Activated CD4-positive, alpha-beta T cell treated with anti-CD3 and anti-CD28 coated beads, Interleukin-2, amount 10 ng/mL, durations not matched to agents 24 days and 14 days (primary cell): ENCODE measurements at regions of chr19 and their contacts with region 1.

Region 1: DNA sequence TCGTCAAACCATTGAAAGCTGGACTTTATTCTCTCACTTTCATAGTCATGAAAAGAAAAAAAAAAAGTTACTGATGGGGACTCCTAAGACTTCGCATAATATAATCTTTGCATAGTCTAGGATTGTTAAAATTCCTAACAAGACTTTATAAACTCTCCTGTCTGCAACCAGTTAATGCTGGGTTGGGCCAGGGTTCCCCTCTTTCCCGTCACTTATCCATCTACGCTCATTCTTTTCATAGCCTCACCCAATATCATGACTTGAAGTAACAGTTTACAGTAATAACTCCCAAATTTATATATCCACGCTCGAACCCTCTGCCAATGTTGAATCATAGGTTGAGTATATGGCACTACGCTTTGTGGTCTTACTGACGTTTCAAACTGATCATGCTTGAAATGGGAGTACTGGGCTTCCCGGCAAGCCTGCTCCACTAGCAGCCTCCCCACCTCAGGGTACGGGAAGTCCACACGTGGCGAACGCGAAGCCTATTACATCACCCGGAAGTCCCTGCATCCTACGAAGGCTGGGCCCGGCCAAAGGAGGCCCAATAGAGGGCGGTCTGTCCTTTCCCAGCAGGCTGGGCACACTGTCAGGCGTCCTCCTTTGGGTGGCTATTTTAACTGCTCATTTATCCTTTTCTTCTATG is 743 bp upstream of the ZNF460 start:
- DNase-seq: peak; percentile 93
- H3K4me3 Mint-ChIP-seq: no peak overlapping the region
- H3K27ac Mint-ChIP-seq: no peak overlapping the region
- H3K4me1 Mint-ChIP-seq: peaks cover 24% of the 10 kb centered on the region
- H3K27me3 Mint-ChIP-seq: no peaks in the 10 kb centered on the region

Region 2: DNA sequence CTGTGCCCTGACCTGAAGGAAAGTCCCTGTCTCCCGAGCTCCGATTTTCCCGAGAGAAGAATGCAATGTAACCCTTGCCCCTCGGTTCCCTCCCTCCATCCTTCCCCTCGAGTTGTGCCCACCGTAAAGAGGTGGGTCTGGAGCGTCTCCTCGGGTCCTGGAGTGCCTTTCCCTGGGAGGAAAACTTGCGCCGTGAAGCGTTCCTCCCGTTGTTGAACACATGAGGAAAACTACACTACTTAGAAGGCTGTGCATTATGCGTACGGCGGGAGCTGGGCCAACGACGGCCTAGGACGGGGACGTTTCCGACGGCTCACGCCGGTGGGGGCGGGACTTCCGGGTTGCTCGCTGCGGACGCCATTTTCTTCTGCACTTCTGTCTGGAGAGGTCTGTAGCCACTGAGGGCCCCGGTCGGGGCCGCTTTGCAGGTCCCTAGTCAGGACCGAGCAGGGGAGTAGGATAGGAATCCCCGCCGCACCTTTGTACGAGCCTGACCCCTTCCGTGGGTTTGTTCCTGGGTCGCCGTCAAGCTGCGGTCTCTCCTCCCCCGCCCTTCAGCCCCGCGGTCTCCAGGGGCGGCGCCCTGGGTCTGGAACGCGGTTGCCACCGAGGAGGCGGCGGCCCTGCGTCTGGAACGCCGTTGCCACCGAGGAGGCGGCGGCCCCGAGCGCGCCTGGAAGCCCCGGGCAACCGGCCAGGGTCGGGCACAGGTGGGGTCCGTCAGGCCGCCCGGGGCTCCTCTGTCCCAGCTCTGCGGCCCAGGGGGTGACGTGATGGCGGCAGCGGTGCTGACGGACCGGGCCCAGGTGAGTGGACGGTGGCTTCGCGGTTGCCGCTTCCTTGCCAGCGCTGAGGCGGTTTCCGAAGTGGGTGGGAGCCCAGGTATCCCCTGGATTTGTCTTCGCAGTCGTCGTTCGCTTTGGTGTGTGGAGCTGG is 88.1 kb before region 1 on chr19 and contains the start of gene ZNF264:
- intact Hi-C with region 1: loop called (anchors 1 kb)
- DNase-seq: peak; percentile 97
- H3K4me3 Mint-ChIP-seq: peak within 1 kb of the TSS; percentile 93
- H3K27ac Mint-ChIP-seq: peak within 1 kb of the TSS; percentile 85
- H3K4me1 Mint-ChIP-seq: peaks cover 20% of the 10 kb centered on the region
- H3K27me3 Mint-ChIP-seq: no peaks in the 10 kb centered on the region
- total RNA-seq, gene ZNF264: 18.0 and 19.9 TPM in 2 replicates

Region 3: GRCh38 chr19:57240311-57241090 is 39.0 kb before region 1 on chr19 and contains the start of gene ZNF805:
- intact Hi-C with region 1: loop called (anchors 1 kb)
- DNase-seq: peak; percentile 98
- H3K4me3 Mint-ChIP-seq: peak within 1 kb of the TSS; percentile 87
- H3K27ac Mint-ChIP-seq: peak within 1 kb of the TSS; percentile 95
- H3K4me1 Mint-ChIP-seq: peaks cover 21% of the 10 kb centered on the region
- H3K27me3 Mint-ChIP-seq: peaks cover 2% of the 10 kb centered on the region
- total RNA-seq, gene ZNF805: 7.6 and 8.6 TPM in 2 replicates

Region 4: GRCh38 chr19:57267291-57267690 is 12.3 kb before region 1 on chr19:
- intact Hi-C with region 1: no loop called
- DNase-seq: no peak
- H3K4me3 Mint-ChIP-seq: no peak overlapping the region
- H3K27ac Mint-ChIP-seq: no peak overlapping the region
- H3K4me1 Mint-ChIP-seq: no peaks in the 10 kb centered on the region
- H3K27me3 Mint-ChIP-seq: no peaks in the 10 kb centered on the region

Region 5: GRCh38 chr19:57308514-57308913 is 29.0 kb after region 1 on chr19:
- intact Hi-C with region 1: no loop called
- DNase-seq: no peak
- H3K4me3 Mint-ChIP-seq: no peak overlapping the region
- H3K27ac Mint-ChIP-seq: no peak overlapping the region
- H3K4me1 Mint-ChIP-seq: no peaks in the 10 kb centered on the region
- H3K27me3 Mint-ChIP-seq: peaks cover 2% of the 10 kb centered on the region

Region 6: DNA sequence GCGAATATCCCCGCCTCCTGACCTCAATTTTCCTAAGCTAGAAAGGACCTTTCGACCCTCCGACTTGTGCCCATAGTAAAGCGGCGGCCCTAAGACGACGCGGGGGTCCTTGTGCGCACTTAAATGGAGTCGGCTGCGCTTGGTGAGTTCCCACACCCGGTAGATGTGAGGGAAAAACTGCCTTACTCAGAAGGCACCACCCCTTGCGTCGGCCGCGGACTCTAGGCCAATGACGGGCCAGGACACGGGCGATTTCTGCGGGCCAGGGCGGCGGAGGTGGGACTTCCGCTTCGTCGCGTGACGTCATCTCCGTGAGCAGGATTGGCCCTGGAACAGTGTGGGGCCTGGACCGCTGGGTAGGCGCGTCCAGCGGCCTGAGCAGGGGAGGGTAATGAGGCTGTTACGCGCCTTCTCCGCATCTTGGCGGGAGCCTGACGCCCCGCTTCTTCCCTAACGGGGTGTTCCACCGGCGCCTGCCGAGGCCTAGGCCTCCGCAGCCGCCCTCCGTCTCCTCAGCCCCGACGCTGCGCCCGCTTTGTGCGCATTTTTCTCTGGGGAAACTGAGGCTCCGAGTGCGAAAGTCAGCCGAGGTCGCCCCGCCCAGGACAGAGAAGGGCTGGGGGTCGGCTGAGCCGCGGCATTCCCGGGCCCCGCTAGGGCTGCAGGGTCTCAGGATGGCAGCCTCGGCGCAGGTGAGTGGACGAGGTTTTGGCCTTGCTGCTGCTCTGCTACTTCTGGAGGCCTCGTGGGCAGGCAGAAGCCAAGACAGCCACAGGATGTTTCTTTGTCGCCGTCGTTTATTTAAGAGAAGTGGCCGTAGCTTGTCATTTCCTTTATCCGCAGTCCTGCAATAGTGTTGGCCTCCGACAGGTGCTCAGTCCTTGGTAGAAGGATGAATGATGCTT is 40.9 kb after region 1 on chr19 and contains the start of gene ZNF543:
- intact Hi-C with region 1: loop called (anchors 1 kb)
- DNase-seq: peak; percentile 98
- H3K4me3 Mint-ChIP-seq: peak within 1 kb of the TSS; percentile 95
- H3K27ac Mint-ChIP-seq: peak within 1 kb of the TSS; percentile 94
- H3K4me1 Mint-ChIP-seq: peaks cover 24% of the 10 kb centered on the region
- H3K27me3 Mint-ChIP-seq: peaks cover 14% of the 10 kb centered on the region
- total RNA-seq, gene ZNF543: 4.9 and 5.3 TPM in 2 replicates

Region 7: DNA sequence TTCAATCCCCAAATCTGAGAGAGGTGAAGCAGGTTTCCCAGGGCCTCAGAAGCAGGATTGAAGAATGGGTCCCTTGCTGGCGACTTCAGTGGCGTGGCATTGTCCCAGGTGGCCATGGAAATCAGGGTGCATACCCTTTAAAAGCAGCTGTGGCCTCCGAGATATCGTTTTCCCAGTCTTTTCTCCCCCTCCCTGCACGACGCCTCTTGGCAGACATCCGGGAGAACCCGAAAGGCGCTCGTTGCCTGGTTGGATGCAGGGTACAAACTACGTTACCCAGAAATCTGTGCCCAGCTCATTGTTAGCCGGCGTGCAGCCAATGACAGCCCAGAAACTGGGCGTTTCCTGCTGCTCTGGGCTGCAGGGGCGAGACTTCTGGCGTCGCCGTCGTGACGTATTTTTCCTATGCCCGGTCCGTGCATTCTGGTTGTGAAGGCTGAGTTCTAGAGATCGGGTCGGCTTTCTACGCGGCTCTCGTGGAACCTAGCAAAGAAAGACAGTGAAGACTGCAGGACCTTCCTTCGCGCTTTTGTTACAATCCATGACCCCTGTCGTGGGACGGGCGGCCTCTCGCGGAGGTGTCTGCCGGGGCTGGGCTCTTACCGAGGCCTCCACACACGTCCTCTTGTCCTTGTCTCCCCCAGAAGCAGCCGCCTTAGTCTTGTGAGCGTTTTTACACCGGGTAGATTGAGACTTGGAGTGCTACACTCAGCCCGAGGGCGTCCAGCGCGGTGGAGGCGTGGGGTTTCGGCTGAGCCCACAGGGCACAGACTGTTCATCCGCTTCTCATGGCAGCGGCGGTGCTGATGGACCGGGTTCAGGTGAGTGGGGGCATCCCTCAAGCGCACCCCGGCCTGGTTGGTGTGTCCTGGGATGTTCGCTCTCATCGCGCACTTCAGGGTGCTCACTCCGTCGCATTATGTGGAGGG is 71.6 kb after region 1 on chr19 and contains the start of gene ZNF304:
- intact Hi-C with region 1: loop called (anchors 1 kb)
- DNase-seq: peak; percentile 96
- H3K4me3 Mint-ChIP-seq: peak within 1 kb of the TSS; percentile 93
- H3K27ac Mint-ChIP-seq: peak within 1 kb of the TSS; percentile 91
- H3K4me1 Mint-ChIP-seq: peaks cover 29% of the 10 kb centered on the region
- H3K27me3 Mint-ChIP-seq: no peaks in the 10 kb centered on the region
- total RNA-seq, gene ZNF304: 5.3 and 5.8 TPM in 2 replicates

Region 8: DNA sequence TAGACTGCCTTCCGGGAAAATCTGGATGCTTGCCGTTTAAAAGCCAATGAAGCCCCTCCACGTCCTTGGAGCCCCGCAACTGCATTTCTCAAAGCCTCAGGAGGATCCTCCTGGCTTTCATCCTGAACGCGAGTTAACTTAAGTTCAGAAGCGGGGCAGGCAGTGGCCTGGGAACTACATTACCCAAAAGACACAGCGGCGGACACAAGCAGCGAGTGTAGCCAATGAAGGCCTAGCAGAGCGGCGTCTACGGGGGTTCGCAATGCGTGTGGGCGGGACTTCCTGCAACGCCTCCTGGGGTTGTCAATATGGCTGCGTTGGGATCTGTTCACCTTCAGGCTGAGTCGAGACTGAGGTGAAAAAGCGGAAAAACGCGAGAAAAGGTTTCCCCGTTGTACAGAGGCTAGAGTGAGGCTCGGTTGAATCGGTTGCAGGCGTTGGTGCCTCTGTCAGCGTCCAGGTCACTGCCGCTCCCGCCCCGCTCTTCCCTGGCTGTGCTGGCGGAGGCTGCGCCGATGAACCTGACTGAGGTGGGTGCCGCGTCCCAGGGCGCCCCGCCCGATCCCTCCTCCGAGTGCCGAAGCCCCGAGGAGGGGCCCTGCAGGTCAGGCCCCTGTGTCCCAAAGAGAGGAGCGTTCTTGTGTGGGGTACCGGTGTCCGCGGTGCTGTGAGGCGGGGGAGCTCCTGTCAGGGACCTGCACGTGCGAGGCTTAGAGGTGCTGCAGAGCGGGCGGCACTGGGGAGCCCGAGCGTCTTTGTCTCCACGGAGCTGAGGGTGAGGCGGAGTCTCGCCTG is 131.5 kb after region 1 on chr19 and contains the start of gene ZNF17:
- intact Hi-C with region 1: loop called (anchors 10 kb)
- DNase-seq: peak; percentile 97
- H3K4me3 Mint-ChIP-seq: peak within 1 kb of the TSS; percentile 94
- H3K27ac Mint-ChIP-seq: peak within 1 kb of the TSS; percentile 80
- H3K4me1 Mint-ChIP-seq: peaks cover 14% of the 10 kb centered on the region
- H3K27me3 Mint-ChIP-seq: no peaks in the 10 kb centered on the region
- total RNA-seq, gene ZNF17: 7.4 and 7.8 TPM in 2 replicates

Region 9: GRCh38 chr19:57632987-57633831 is 353.7 kb after region 1 on chr19 and contains the start of gene ZNF211:
- intact Hi-C with region 1: loop called (anchors 2 kb)
- DNase-seq: peak; percentile 95
- H3K4me3 Mint-ChIP-seq: peak within 1 kb of the TSS; percentile 87
- H3K27ac Mint-ChIP-seq: peak within 1 kb of the TSS; percentile 87
- H3K4me1 Mint-ChIP-seq: peaks cover 14% of the 10 kb centered on the region
- H3K27me3 Mint-ChIP-seq: no peaks in the 10 kb centered on the region
- total RNA-seq, gene ZNF211: 7.7 and 10.0 TPM in 2 replicates